ENCODE measurements at regions of chr11 and their contacts with region 1.

Region 1: DNA sequence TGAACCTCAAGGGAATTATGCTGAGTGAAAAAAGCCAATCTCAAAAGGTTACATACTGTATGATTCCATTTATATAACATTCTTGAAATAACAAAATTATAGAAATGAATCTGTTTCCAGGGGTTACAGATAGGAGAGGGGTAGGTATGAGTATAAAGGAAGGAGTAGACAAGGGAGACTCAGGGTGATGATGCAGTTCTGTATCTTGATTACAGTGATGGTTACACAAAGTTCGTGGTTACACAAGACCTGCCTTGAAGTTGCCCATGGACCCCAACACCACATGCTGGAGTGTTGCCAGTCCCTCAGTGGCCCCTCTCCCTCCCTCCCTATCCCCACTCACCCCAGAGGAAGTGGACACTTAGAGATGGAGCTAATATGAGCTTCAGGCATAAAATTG is 20.3 kb downstream of the STK33 start:
- DNase-seq: no peak
- ATAC-seq: no peak
- H3K4me3 ChIP-seq: no peak overlapping the region
- H3K27ac ChIP-seq: no peak overlapping the region
- H3K4me1 ChIP-seq: no peaks in the 10 kb centered on the region
- H3K27me3 ChIP-seq: peaks cover 8% of the 10 kb centered on the region
- CTCF ChIP-seq: no peak

Region 2: DNA sequence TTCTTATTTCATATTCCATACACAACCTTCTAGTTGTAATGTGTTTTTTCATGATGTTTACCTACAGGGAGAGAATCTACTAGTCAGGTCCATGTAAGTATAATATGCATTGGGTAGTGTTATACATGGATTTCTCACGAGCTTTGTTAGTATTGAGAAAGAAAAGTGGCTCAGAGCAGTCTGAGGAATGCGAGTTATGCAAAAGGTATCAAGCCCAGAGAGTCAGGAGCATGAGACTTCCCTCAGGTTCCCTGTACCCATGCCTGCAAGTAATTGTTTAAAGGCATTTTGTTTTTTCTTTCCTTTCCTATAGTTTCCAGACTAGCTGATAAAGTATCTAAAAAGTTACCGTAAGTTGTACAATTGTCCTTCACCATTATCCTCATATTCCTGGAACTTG is 45.8 kb before region 1 on chr11:
- CTCF ChIA-PET with region 1: no interaction called
- POLR2A ChIA-PET with region 1: no interaction called
- in situ Hi-C with region 1: no loop called
- intact Hi-C with region 1: no loop called
- DNase-seq: no peak
- ATAC-seq: no peak
- H3K4me3 ChIP-seq: no peak overlapping the region
- H3K27ac ChIP-seq: no peak overlapping the region
- H3K4me1 ChIP-seq: no peaks in the 10 kb centered on the region
- H3K27me3 ChIP-seq: no peaks in the 10 kb centered on the region
- CTCF ChIP-seq: no peak

Region 3: DNA sequence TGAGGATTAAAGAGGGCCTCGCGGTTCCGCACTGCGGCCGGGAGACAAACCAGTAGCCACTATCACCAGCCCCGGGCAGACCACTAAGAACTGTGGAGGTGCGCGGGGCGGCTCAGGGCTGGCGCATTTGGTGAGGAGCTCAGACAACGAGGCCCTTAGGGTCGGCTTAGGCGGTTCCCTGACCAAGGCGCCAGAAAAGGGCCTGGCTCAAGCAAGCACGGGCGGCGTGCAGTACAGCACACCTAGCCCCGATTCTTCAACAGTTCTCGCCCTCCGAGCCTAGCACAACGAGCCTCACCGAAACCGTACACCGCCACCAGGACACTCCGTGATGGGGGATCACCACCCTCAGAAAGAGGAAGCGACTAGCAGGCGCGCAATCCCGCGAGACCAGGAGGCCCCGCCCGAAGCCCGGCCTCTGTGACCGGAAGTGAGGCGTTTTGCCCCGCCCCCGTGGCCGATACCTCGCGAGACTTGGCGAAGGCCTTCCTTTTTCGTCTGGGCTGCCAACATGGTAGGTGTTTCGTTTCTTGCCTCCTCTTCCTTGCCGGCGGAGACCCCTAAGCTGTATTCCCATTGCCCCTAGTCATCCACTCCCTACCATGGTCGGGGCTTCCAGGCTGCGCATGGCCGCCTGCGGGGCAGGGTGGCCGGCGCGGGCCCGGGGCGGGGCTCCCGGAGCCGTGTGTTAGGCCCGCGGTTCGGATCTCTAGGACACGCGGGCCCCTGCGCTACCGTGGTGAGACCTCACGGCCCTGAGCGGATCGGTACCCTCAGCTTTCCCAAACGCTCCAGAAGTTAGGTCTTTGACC is 108.7 kb after region 1 on chr11 and contains the starts of genes RPL27A and TRIM66:
- CTCF ChIA-PET with region 1: no interaction called
- POLR2A ChIA-PET with region 1: interaction called, 10 read pairs
- in situ Hi-C with region 1: no loop called
- intact Hi-C with region 1: no loop called
- DNase-seq: peak; percentile 92
- ATAC-seq: peak; percentile 95
- H3K4me3 ChIP-seq: peak within 1 kb of the TSS; percentile 91 to 92
- H3K27ac ChIP-seq: peak within 1 kb of the TSS; percentile 100
- H3K4me1 ChIP-seq: peaks cover 36% of the 10 kb centered on the region
- H3K27me3 ChIP-seq: no peaks in the 10 kb centered on the region
- CTCF ChIP-seq: no peak
- total RNA-seq, gene RPL27A: 1,115 TPM
- total RNA-seq, gene TRIM66: 30.4 TPM

Region 4: DNA sequence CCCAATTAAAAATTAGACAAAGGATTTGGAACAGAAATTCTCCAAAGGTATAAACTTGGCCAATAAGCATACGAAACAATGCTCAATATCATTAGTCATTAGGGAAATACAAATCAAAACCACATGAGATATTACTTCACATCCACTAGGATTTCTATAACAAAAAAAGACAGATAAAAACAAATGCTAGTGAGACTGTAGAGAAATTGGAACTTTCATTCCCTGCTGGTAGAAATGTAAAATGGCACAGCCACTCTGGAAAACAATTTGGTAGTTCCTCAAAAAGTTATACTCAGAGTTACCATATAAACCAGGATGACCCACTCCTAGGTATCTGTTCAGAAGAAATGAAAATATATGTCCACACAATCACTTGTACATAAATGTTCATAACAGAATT is 180.5 kb after region 1 on chr11:
- CTCF ChIA-PET with region 1: no interaction called
- POLR2A ChIA-PET with region 1: no interaction called
- in situ Hi-C with region 1: no loop called
- intact Hi-C with region 1: no loop called
- DNase-seq: no peak
- ATAC-seq: no peak
- H3K4me3 ChIP-seq: no peak overlapping the region
- H3K27ac ChIP-seq: no peak overlapping the region
- H3K4me1 ChIP-seq: no peaks in the 10 kb centered on the region
- H3K27me3 ChIP-seq: no peaks in the 10 kb centered on the region
- CTCF ChIP-seq: no peak